Right cardiac atrium (tissue), 5 donors: ENCODE measurements at regions of chrX and their contacts with region 1.

Region 1: GRCh38 chrX:19535476-19535875 is 20.2 kb upstream of the MAP3K15 start:
- DNase-seq: no peak
- ATAC-seq: no peak
- H3K4me3 ChIP-seq: no peak overlapping the region
- H3K27ac ChIP-seq: no peak overlapping the region
- H3K4me1 ChIP-seq: no peaks in the 10 kb centered on the region
- H3K27me3 ChIP-seq: no peaks in the 10 kb centered on the region

Region 2: GRCh38 chrX:18654875-18655836 is 880.3 kb before region 1 on chrX:
- intact Hi-C with region 1: no loop called
- DNase-seq: no peak
- ATAC-seq: no peak
- H3K4me3 ChIP-seq: no peak overlapping the region
- H3K27ac ChIP-seq: no peak overlapping the region
- H3K4me1 ChIP-seq: no peaks in the 10 kb centered on the region
- H3K27me3 ChIP-seq: no peaks in the 10 kb centered on the region

Region 3: DNA sequence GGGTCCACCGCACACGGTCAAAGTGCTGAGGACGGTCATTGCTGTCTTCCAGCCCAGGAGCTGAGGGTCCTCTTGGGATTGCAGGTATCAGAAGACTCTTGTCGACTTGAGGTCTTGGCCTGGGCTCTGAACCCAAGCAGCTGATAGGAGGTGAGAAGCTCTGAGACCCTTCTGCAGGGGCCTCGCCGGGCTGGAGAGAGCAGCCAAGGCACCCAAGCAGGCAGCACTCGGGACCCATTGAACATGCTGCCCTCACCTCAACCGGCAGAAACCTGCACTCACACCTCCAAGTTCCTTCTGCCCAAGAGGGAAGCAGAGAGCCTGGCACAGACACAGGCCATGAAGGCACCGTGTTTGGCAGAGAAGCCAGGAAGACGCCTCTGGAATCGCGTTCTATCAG is 157.7 kb before region 1 on chrX:
- intact Hi-C with region 1: loop called in 1 of 4 experiments (anchors 5 kb)
- DNase-seq: no peak
- ATAC-seq: no peak
- H3K4me3 ChIP-seq: no peak overlapping the region
- H3K27ac ChIP-seq: no peak overlapping the region
- H3K4me1 ChIP-seq: no peaks in the 10 kb centered on the region
- H3K27me3 ChIP-seq: no peaks in the 10 kb centered on the region